CD14-positive monocyte (primary cell): ENCODE measurements at regions of chr1 and their contacts with region 1.

Region 1: GRCh38 chr1:158285756-158286241 is 3.9 kb upstream of the CD1C start:
- DNase-seq: peak; percentile 98 to 100 (median 98)
- H3K4me3 ChIP-seq: peak overlapping the region in 1 of 3 experiments; percentile 52
- H3K4me3 Mint-ChIP-seq: peak overlapping the region; percentile 55 to 63
- H3K27ac ChIP-seq: peak overlapping the region; percentile 92 to 94
- H3K27ac Mint-ChIP-seq: peak overlapping the region; percentile 96 to 100 (median 98)
- H3K4me1 ChIP-seq: peaks cover 80 to 92% of the 10 kb centered on the region in 2 donors
- H3K4me1 Mint-ChIP-seq: peaks cover 62% of the 10 kb centered on the region
- H3K27me3 ChIP-seq: no peaks in the 10 kb centered on the region
- H3K27me3 Mint-ChIP-seq: peaks cover 0 to 1% (median 0%) of the 10 kb centered on the region in 3 donors
- CTCF ChIP-seq: no peak

Region 2: DNA sequence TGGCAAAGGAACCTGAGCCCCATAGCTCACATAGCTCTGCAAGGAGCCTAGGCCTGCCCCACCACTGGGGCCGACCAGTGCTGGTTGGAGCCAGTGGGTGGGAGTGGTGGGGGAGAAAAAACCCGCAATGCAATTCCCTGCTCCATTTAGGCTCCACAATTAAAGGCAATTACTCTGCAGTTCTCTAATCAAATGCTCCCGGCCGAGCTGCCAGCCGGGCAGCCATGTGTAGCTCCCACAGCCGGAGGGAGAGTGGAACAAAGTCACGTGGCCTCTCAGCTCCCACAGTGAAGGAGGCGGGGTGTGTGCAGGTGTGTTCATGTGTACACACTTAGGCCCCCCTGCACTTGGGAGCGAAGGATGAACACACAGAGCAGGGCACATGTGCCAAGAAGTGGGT is 210.7 kb before region 1 on chr1:
- intact Hi-C with region 1: no loop called
- DNase-seq: no peak
- H3K4me3 ChIP-seq: no peak overlapping the region
- H3K4me3 Mint-ChIP-seq: no peak overlapping the region
- H3K27ac ChIP-seq: no peak overlapping the region
- H3K27ac Mint-ChIP-seq: no peak overlapping the region
- H3K4me1 ChIP-seq: no peaks in the 10 kb centered on the region
- H3K4me1 Mint-ChIP-seq: no peaks in the 10 kb centered on the region
- H3K27me3 ChIP-seq: no peaks in the 10 kb centered on the region
- H3K27me3 Mint-ChIP-seq: peaks cover 0 to 3% (median 2%) of the 10 kb centered on the region in 3 donors
- CTCF ChIP-seq: no peak

Region 3: GRCh38 chr1:158163000-158163947 is 122.5 kb before region 1 on chr1:
- intact Hi-C with region 1: loop called in 1 of 2 experiments (anchors 5 kb)
- DNase-seq: peak; percentile 56 to 64 (median 59)
- H3K4me3 ChIP-seq: peak overlapping the region in 1 of 3 experiments; percentile 64
- H3K4me3 Mint-ChIP-seq: peak overlapping the region; percentile 49 to 83
- H3K27ac ChIP-seq: peak overlapping the region; percentile 0 to 71
- H3K27ac Mint-ChIP-seq: peak overlapping the region; percentile 85 to 98 (median 95)
- H3K4me1 ChIP-seq: peaks cover 37 to 50% of the 10 kb centered on the region in 2 donors
- H3K4me1 Mint-ChIP-seq: peaks cover 45% of the 10 kb centered on the region
- H3K27me3 ChIP-seq: no peaks in the 10 kb centered on the region
- H3K27me3 Mint-ChIP-seq: peaks cover 0 to 2% (median 2%) of the 10 kb centered on the region in 3 donors
- CTCF ChIP-seq: no peak

Region 4: DNA sequence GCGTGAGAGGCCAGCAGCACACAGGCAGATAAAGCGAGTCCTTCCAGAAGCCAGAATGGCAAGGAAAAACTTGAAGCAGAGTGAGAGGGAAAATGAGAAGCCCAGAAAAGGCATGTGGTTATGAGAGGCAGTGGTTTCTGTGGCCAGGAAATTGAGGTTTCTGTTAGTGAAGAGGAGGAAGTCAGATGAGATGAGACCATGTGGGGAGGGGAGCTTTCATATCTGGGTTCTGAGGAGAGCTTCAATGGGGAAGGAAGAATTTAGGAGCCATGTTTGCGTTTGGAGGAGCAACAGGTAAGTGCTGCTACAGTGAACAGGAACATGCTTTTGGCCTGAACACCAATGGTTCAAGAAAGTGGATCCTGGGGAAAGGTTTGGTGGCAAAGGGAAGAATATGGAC is 37.7 kb before region 1 on chr1:
- intact Hi-C with region 1: loop called in 1 of 2 experiments (anchors 5 kb)
- DNase-seq: peak; percentile 68 to 86 (median 81)
- H3K4me3 ChIP-seq: peak overlapping the region in 1 of 3 experiments; percentile 62
- H3K4me3 Mint-ChIP-seq: peak overlapping the region; percentile 69 to 83
- H3K27ac ChIP-seq: peak overlapping the region; percentile 61 to 71
- H3K27ac Mint-ChIP-seq: peak overlapping the region; percentile 91 to 98 (median 95)
- H3K4me1 ChIP-seq: peaks cover 59 to 67% of the 10 kb centered on the region in 2 donors
- H3K4me1 Mint-ChIP-seq: peaks cover 67% of the 10 kb centered on the region
- H3K27me3 ChIP-seq: peaks cover 15 to 20% of the 10 kb centered on the region in 2 donors
- H3K27me3 Mint-ChIP-seq: peaks cover 13 to 30% (median 16%) of the 10 kb centered on the region in 3 donors
- CTCF ChIP-seq: no peak

Region 5: DNA sequence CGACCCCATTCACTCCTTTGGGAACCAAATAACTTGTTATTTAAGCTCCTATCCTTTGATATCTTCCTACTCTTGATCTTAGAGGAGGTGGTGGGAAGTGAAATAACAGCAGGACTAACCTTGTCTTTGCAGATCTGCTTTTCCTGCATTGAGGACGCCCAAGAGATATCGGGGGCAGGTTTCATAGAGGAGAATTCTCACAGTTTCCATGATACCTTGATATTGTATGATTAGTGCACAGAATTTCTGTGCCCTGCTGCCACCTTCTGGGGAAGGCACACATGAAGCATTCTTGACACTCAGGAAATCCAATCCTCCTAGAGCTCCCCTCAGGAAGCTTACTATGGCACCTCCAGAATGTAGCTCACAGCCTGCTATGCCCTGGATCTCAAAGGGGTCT is 43.9 kb after region 1 on chr1:
- intact Hi-C with region 1: loop called in 1 of 2 experiments (anchors 5 kb)
- DNase-seq: peak in 2 of 3 donors; percentile 30 to 39
- H3K4me3 ChIP-seq: no peak overlapping the region
- H3K4me3 Mint-ChIP-seq: no peak overlapping the region
- H3K27ac ChIP-seq: no peak overlapping the region
- H3K27ac Mint-ChIP-seq: peak overlapping the region in 1 of 7 donors; percentile 74
- H3K4me1 ChIP-seq: peaks cover 58 to 68% of the 10 kb centered on the region in 2 donors
- H3K4me1 Mint-ChIP-seq: peaks cover 23% of the 10 kb centered on the region
- H3K27me3 ChIP-seq: no peaks in the 10 kb centered on the region
- H3K27me3 Mint-ChIP-seq: peaks cover 0 to 4% (median 0%) of the 10 kb centered on the region in 3 donors
- CTCF ChIP-seq: peak; percentile 49